ENCODE measurements at regions of chr7 and their contacts with region 1.

Region 1: GRCh38 chr7:52406808-52407207 is 628.6 kb upstream of the POM121L12 start:
- DNase-seq: no peak
- H3K4me3 Mint-ChIP-seq: no peak overlapping the region
- H3K27ac Mint-ChIP-seq: no peak overlapping the region
- H3K4me1 Mint-ChIP-seq: peaks cover 7% of the 10 kb centered on the region
- H3K27me3 Mint-ChIP-seq: no peaks in the 10 kb centered on the region
- CTCF ChIP-seq: no peak

Region 2: GRCh38 chr7:50793115-50793946 is 1613.5 kb before region 1 on chr7:
- CTCF ChIA-PET with region 1: no interaction called
- POLR2A ChIA-PET with region 1: no interaction called
- intact Hi-C with region 1: no loop called
- DNase-seq: peak; percentile 62
- H3K4me3 Mint-ChIP-seq: peak overlapping the region; percentile 54
- H3K27ac Mint-ChIP-seq: no peak overlapping the region
- H3K4me1 Mint-ChIP-seq: peaks cover 13% of the 10 kb centered on the region
- H3K27me3 Mint-ChIP-seq: no peaks in the 10 kb centered on the region
- CTCF ChIP-seq: no peak

Region 3: DNA sequence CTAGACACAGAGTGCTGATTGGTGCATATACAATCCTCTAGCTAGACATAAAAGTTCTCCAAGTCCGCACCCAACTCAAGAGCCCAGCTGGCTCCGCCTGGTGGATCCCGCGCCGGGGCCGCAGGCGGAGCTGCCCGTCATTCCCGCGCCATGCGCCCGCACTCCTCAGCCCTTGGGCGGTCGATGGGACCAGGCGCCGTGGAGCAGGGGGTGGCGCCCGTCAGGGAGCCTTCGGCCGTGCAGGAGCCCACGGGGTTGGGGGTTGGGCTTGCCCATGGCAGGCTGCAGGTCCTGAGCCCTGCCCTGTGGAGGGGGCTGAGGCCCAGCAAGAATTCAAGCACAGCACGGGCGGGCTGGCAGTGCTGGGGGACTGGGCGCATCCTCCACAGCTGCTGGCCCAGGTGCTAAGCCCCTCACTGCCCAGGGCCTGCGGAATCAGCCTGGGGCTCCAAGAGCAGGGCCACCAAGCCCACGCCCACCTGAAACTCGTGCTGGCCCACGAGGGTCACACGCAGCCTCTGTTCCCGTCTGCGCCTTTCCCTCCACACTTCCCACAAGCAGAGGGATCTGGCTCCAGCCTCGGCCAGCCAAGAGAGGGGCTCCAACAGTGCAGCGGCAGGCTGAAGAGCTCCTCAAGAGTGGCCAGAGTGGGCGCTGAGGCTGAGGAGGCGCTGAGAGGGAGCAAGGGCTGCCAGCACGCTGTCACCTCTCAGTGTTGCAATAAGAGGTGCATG is 24.4 kb after region 1 on chr7:
- CTCF ChIA-PET with region 1: interaction called, 10 read pairs
- POLR2A ChIA-PET with region 1: no interaction called
- intact Hi-C with region 1: no loop called
- DNase-seq: no peak
- H3K4me3 Mint-ChIP-seq: no peak overlapping the region
- H3K27ac Mint-ChIP-seq: no peak overlapping the region
- H3K4me1 Mint-ChIP-seq: no peaks in the 10 kb centered on the region
- H3K27me3 Mint-ChIP-seq: no peaks in the 10 kb centered on the region
- CTCF ChIP-seq: no peak